Activated CD4-positive, alpha-beta T cell treated with anti-CD3 and anti-CD28 coated beads, Interleukin-2, amount 10 ng/mL, durations not matched to agents 7 days and 5 days (primary cell): ENCODE measurements at regions of chr10 and their contacts with region 1.

Region 1: GRCh38 chr10:15141136-15142054 is 27.1 kb downstream of the NMT2 start:
- DNase-seq: peak; percentile 14
- H3K4me3 Mint-ChIP-seq: peak overlapping the region; percentile 32
- H3K27ac Mint-ChIP-seq: peak overlapping the region; percentile 73
- H3K4me1 Mint-ChIP-seq: peaks cover 39% of the 10 kb centered on the region
- H3K27me3 Mint-ChIP-seq: no peaks in the 10 kb centered on the region

Region 2: GRCh38 chr10:15131330-15131729 is 10.1 kb before region 1 on chr10:
- CTCF ChIA-PET with region 1: interaction called, 11 read pairs
- POLR2A ChIA-PET with region 1: no interaction called
- DNase-seq: no peak
- H3K4me3 Mint-ChIP-seq: no peak overlapping the region
- H3K27ac Mint-ChIP-seq: no peak overlapping the region
- H3K4me1 Mint-ChIP-seq: peaks cover 6% of the 10 kb centered on the region
- H3K27me3 Mint-ChIP-seq: no peaks in the 10 kb centered on the region

Region 3: GRCh38 chr10:15168781-15169554 is 27.6 kb after region 1 on chr10:
- CTCF ChIA-PET with region 1: interaction called, 3 read pairs
- POLR2A ChIA-PET with region 1: interaction called, 10 read pairs
- DNase-seq: peak; percentile 97
- H3K4me3 Mint-ChIP-seq: peak overlapping the region; percentile 79
- H3K27ac Mint-ChIP-seq: peak overlapping the region; percentile 97
- H3K4me1 Mint-ChIP-seq: peaks cover 57% of the 10 kb centered on the region
- H3K27me3 Mint-ChIP-seq: no peaks in the 10 kb centered on the region

Region 4: GRCh38 chr10:15348579-15348978 is 207.2 kb after region 1 on chr10:
- CTCF ChIA-PET with region 1: no interaction called
- POLR2A ChIA-PET with region 1: no interaction called
- DNase-seq: no peak
- H3K4me3 Mint-ChIP-seq: no peak overlapping the region
- H3K27ac Mint-ChIP-seq: no peak overlapping the region
- H3K4me1 Mint-ChIP-seq: no peaks in the 10 kb centered on the region
- H3K27me3 Mint-ChIP-seq: peaks cover 2% of the 10 kb centered on the region